ENCODE measurements at regions of chr4 and their contacts with region 1.

Region 1: GRCh38 chr4:103934178-103934789 is 214.5 kb upstream of the TACR3 start:
- DNase-seq: no peak
- H3K4me3 ChIP-seq: no peak overlapping the region
- H3K27ac ChIP-seq: no peak overlapping the region
- H3K4me1 ChIP-seq: no peaks in the 10 kb centered on the region
- H3K27me3 ChIP-seq: no peaks in the 10 kb centered on the region
- CTCF ChIP-seq: peak in 2 of 3 experiments; percentile 26 to 54; a peak in 2 of 4 replicates
- EP300 ChIP-seq: no peak
- POLR2A ChIP-seq: no peak
- RAD21 ChIP-seq: peak; percentile 56 to 65

Region 2: DNA sequence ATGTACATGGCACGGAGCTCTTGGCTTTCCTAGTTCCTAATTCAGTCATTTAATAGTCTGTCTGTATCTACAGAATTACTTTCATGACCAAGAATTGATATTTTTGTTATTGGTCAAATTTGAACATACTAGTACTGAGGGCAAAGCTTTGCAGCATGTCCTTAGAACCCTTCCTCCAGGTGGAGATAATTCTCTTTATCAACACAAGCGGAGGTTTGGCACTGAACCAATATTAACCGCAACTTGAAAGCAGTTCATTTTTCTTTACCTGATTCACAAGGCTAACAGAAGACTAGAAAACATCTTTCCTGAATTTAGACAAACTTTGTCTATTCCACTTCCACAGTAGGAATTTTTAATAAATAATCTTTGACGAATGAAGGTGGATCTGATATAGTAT is 288.3 kb before region 1 on chr4:
- CTCF ChIA-PET with region 1: no interaction called
- POLR2A ChIA-PET with region 1: no interaction called
- DNase-seq: no peak
- H3K4me3 ChIP-seq: no peak overlapping the region
- H3K27ac ChIP-seq: no peak overlapping the region; the same call in 1 of the 2 replicates
- H3K4me1 ChIP-seq: no peaks in the 10 kb centered on the region
- H3K27me3 ChIP-seq: no peaks in the 10 kb centered on the region
- CTCF ChIP-seq: no peak
- EP300 ChIP-seq: no peak
- POLR2A ChIP-seq: no peak
- RAD21 ChIP-seq: no peak

Region 3: GRCh38 chr4:103994059-103994458 is 59.8 kb after region 1 on chr4:
- CTCF ChIA-PET with region 1: interaction called, 10 read pairs
- POLR2A ChIA-PET with region 1: no interaction called
- DNase-seq: no peak
- H3K4me3 ChIP-seq: no peak overlapping the region
- H3K27ac ChIP-seq: no peak overlapping the region
- H3K4me1 ChIP-seq: peaks cover 0 to 8% (median 3%) of the 10 kb centered on the region in 4 experiments; a peak in 5 of 7 replicates
- H3K27me3 ChIP-seq: no peaks in the 10 kb centered on the region
- CTCF ChIP-seq: peak in 2 of 3 experiments; percentile 33 to 36; a peak in 2 of 4 replicates
- EP300 ChIP-seq: no peak
- POLR2A ChIP-seq: no peak
- RAD21 ChIP-seq: peak; percentile 70 to 75

Region 4: DNA sequence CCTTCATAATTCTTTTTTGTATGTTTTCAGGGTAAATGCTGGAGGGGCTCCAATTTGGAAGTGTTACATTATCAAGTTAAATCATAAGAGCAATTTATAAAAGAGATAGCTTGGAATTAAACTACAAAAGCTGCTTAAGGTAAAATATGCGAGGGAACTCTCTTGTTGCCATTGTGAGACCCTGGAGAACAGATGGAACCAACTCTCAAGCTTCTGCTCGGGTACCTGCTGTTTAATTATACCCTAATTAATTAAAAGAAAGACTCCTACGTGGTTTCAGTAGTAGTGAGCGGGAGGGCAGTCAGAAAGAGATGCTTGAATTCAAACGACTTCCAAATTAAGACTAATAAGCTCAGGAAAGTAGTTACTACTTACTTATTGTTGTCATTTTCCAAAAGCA is 98.6 kb after region 1 on chr4:
- CTCF ChIA-PET with region 1: no interaction called
- POLR2A ChIA-PET with region 1: no interaction called
- DNase-seq: no peak
- H3K4me3 ChIP-seq: no peak overlapping the region
- H3K27ac ChIP-seq: no peak overlapping the region
- H3K4me1 ChIP-seq: no peaks in the 10 kb centered on the region
- H3K27me3 ChIP-seq: no peaks in the 10 kb centered on the region
- CTCF ChIP-seq: no peak
- EP300 ChIP-seq: no peak
- POLR2A ChIP-seq: no peak
- RAD21 ChIP-seq: no peak

Measured in H1 (cell line).